ENCODE measurements at regions of chr19 and their contacts with region 1.

Region 1: GRCh38 chr19:30227661-30228428 is 144.3 kb upstream of the ZNF536 start:
- DNase-seq: peak; percentile 65 to 97 (median 76)

Region 2: DNA sequence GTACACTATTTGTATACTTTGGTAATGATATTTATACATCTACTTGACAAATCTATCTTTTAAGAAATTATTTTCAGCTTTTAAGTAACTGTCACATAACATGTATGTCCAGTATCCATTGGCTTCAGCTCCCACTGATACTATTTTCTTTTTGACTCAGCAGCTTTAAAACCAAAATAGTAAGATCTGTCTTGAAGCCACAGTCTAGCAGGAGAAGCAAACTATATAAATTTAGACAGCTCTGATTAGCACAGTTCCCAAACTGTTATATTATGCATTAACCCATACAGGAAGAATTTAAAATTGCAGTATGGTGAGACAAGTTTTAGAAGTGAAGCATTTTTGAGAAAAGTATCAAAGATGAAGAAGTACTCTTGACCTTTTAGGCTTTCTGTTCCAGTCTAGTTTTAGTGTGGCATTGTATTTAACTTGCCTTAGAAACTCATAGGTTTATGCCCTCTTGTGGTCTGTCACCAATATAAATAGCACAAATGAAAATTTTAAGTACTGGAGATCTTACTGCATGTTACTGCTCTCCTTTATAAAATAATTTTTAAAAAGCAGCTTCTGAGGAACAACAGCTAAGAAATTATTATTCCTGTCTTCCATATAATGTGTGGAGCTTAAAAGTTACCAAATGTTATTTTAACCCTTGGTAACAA is 261.1 kb before region 1 on chr19:
- intact Hi-C with region 1: loop called (anchors 10 kb)
- DNase-seq: no peak

Region 3: DNA sequence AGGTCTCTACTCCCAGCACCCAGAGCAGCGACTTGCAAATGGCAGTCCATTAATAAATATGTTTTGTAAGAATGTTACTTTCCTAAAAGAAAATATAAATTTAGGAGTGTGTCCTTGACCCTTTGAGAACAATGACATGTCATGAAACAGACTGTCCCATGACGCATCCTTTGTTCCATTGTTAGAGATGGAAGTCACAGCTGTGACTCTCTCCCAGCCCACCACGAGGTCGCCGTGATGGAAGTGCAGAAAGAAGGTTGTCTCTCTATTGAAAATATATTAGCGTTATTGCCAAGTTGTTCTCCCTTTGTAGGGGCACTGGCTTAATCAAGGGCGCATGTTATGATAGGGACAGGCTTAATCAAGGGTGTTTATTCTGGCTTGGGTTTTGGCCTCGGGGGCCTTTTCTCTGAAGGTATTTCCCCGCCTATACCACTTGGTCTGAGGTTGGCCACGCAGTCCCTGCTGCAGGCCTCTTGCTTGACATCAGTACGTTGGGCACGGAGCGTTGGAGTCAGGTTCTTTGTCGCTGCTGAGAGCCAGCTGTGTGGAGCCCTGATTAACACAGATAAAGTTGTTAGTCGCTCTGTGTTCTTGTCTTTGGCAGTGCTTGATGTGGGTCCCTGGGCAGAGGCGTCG is 17.7 kb after region 1 on chr19:
- intact Hi-C with region 1: no loop called
- DNase-seq: peak in 1 of 10 donors; percentile 22

Region 4: DNA sequence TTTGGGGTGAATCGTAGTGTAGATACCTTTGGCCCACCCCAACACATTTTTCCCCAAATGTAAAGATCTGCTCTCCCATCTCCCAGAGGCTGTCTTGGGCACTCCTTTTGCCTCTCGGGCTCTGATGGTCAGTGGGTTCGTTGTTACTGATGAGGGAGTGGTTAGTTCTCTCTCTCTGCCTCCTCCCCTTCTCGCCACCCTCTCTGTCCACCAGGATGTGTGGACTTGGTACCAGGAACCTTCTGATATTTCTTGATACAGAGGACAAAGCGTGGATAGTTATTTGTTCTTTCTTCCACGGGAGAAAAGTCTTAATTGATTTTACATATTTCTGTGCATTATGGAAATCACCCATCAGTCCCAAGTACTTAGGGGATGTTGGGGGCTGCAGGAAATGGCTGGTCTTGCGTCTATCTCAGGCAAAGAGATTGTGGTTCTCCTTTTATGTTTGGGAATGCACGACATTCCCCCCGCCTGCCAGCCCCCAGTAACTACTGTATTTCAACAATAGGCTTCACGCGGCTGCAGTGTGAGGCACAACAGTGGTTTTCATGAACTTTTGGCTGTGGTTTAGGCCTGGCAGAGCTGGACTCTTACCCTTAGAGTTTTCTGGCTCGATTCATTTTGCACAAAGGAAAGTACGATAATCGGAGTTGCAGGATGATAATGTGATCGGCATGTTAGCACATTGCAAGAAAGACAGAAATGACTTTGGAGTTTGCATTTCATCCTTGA is 65.4 kb after region 1 on chr19:
- intact Hi-C with region 1: loop called (anchors 10 kb)
- DNase-seq: peak in 7 of 10 donors; percentile 27 to 91 (median 45)

Region 5: DNA sequence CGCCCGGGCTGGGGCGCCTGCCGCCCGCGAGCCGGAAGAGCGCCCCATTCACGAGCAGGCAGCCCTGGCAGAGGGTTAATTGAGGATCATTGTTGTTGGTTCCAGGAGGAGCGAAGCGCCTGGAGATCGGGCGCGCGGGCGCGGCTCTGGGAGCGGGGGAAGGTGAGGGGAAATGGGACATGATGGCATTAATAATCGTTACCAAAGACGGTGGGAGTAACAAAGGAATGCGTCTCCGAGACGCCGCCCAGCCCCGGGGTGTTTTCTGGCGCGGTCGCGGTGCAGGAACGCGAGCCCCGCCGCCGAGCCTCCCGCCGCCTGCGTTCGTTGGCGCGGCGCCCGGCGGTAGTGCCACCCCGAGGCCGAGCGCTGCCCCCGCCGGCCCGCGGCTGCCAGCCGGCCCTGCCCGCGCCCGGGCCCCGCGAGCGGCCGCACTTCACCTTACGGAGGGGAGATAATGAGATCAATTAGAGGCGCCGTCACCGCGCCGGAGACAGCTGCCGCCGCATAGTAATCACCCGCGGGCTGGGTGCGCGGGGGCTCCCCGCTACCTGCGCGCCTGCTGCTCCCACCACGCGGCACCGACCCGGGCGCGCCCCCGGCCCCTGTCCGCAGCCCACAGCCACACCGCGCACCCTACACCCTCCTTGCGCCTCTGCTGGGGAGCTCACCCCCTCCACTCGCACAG is 147.2 kb after region 1 on chr19:
- intact Hi-C with region 1: loop called (anchors 2 kb)
- DNase-seq: peak in 4 of 10 donors; percentile 19 to 88 (median 74)

Region 6: DNA sequence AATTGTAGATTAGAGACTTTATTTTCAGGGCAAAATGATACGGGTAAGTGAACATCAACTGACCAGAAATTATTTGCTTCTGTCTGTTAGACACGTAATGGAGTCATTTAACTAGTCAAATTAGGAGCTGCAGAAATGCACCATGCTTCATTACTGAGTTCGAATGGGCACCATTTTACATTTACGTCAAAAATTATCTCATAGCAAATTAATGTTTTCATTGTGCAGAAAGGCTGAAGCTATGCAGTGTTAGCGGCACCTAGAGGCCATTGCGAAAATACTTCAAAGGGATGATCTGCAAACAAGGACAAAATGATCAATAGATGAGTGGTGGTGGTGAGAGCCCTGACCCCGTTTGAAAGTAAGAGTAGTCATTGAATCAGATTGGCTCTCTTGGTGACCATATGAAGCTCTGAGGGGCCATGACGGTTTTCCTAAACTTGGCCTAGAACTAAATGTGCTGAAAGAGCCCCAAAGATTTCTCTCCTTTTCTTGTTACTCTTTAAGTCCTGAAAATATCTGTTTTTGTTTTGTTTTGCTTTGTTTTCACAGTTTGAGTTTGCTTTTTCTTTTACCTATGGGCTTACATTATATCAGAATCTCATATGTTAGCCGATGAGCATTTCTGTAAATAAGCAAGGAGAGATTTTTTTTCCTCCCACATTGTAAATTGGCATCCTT is 422.2 kb after region 1 on chr19:
- intact Hi-C with region 1: loop called (anchors 5 kb)
- DNase-seq: peak in 3 of 10 donors; percentile 54 to 65 (median 62)